Aorta (tissue), 5 donors: ENCODE measurements at regions of chr18 and their contacts with region 1.

Region 1: DNA sequence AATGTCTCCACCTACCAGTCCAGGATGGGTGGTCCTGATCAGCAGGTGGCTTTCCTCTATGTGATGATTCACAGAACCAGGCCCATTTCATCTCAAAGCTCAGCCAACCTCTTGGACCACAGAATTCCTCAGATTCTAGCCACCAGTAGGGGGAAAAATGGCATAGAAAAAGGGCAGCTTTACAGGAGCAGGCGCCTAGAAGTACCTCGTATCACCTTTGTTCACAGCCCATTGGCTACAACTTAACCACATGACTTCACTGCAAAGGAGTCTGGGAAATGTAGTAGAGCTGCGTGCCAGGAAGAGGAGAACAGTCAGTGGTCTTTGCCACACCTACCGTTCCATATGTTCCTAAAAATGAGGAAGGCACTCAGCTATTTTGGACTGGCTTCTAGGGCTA is 62.8 kb upstream of the DTNA start:
- DNase-seq: no peak
- ATAC-seq: no peak
- H3K4me3 ChIP-seq: no peak overlapping the region
- H3K27ac ChIP-seq: no peak overlapping the region
- H3K4me1 ChIP-seq: peaks cover 0 to 9% of the 10 kb centered on the region in 2 donors
- H3K27me3 ChIP-seq: no peaks in the 10 kb centered on the region

Region 2: GRCh38 chr18:34122724-34123334 is 524.4 kb before region 1 on chr18:
- intact Hi-C with region 1: loop called in 1 of 2 experiments (anchors 10 kb)
- DNase-seq: no peak
- ATAC-seq: peak; percentile 59
- H3K4me3 ChIP-seq: no peak overlapping the region
- H3K27ac ChIP-seq: no peak overlapping the region
- H3K4me1 ChIP-seq: no peaks in the 10 kb centered on the region
- H3K27me3 ChIP-seq: no peaks in the 10 kb centered on the region

Region 3: DNA sequence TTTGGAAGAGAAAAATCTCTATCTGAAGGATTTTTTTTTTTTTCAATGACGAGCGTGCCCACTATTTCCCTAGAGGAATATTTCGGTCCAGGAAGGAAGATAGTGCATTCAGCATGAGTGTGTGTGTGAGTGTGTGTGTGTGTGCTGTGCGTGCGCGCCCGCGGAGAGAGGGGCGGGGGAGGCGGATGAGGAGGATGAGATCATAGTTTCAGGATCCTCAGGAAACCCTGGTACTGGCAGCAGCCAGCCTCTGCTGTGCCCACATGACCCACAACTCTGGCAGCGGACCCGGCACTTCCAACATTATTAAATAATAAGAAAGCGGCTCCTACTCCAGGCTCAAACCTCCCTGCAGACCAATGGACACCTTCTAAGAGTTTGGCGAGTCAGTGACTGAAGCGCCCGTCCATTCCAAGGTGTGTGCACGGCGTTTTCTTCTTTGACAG is 154.1 kb before region 1 on chr18:
- intact Hi-C with region 1: loop called (anchors 5 kb)
- DNase-seq: peak; percentile 91 to 93
- ATAC-seq: peak; percentile 88
- H3K4me3 ChIP-seq: peak overlapping the region; percentile 95 to 99
- H3K27ac ChIP-seq: peak overlapping the region in 1 of 2 donors; percentile 80
- H3K4me1 ChIP-seq: peaks cover 0 to 2% of the 10 kb centered on the region in 2 donors
- H3K27me3 ChIP-seq: no peaks in the 10 kb centered on the region

Region 4: GRCh38 chr18:34592961-34593382 is 54.3 kb before region 1 on chr18:
- intact Hi-C with region 1: loop called in 1 of 2 experiments (anchors 5 kb)
- DNase-seq: peak; percentile 70 to 84
- ATAC-seq: peak; percentile 90
- H3K4me3 ChIP-seq: peak overlapping the region; percentile 43 to 89
- H3K27ac ChIP-seq: peak overlapping the region; percentile 77 to 87
- H3K4me1 ChIP-seq: peaks cover 0 to 8% of the 10 kb centered on the region in 2 donors
- H3K27me3 ChIP-seq: no peaks in the 10 kb centered on the region

Region 5: GRCh38 chr18:34609991-34610648 is 37.1 kb before region 1 on chr18:
- intact Hi-C with region 1: loop called in 1 of 2 experiments (anchors 5 kb)
- DNase-seq: no peak
- ATAC-seq: no peak
- H3K4me3 ChIP-seq: no peak overlapping the region
- H3K27ac ChIP-seq: no peak overlapping the region
- H3K4me1 ChIP-seq: peaks cover 0 to 2% of the 10 kb centered on the region in 2 donors
- H3K27me3 ChIP-seq: no peaks in the 10 kb centered on the region

Region 6: DNA sequence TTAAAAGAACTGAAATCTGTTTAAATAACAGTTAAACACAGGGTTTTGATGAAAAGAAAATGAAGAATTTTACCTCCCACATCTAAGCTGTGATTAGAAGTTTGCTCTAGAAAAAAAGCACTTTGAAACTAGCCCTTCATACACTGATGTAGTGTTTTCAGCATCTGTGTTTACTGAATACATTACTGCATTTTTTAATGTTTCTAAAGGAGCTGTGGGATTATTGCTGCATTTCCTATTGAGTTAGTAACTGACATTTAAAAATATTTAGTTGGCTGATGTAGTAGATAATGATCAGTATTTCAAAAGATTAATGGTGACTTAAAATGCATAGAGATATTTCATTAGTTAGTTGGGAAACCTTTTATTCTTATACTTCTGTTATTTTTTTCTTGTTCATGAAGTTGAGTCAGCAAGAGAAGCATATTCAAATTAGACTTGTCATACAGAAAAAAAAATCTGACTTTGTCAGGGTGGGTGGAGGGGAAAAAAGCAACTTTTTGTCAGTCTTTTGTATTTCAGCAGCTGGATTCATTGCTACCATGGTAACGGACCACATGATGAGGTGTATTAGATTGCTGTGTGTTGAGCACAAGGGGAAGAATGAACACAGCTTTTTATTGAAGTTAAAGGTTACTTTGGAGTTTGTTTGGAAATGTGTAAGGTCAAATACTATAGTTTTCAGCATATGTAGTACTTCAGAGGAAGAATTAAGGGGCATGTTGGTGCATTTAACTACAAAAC is 62.6 kb after region 1 on chr18 and contains the start of gene DTNA:
- intact Hi-C with region 1: no loop called
- DNase-seq: no peak
- ATAC-seq: peak; percentile 69
- H3K4me3 ChIP-seq: peak within 1 kb of the TSS; percentile 43 to 48
- H3K27ac ChIP-seq: no peak within 1 kb of the TSS
- H3K4me1 ChIP-seq: peaks cover 3 to 9% of the 10 kb centered on the region in 2 donors
- H3K27me3 ChIP-seq: no peaks in the 10 kb centered on the region
- total RNA-seq, gene DTNA: 47.6 to 101 TPM